OCI-LY7 (cell line): ENCODE measurements at regions of chr1 and their contacts with region 1.

Region 1: DNA sequence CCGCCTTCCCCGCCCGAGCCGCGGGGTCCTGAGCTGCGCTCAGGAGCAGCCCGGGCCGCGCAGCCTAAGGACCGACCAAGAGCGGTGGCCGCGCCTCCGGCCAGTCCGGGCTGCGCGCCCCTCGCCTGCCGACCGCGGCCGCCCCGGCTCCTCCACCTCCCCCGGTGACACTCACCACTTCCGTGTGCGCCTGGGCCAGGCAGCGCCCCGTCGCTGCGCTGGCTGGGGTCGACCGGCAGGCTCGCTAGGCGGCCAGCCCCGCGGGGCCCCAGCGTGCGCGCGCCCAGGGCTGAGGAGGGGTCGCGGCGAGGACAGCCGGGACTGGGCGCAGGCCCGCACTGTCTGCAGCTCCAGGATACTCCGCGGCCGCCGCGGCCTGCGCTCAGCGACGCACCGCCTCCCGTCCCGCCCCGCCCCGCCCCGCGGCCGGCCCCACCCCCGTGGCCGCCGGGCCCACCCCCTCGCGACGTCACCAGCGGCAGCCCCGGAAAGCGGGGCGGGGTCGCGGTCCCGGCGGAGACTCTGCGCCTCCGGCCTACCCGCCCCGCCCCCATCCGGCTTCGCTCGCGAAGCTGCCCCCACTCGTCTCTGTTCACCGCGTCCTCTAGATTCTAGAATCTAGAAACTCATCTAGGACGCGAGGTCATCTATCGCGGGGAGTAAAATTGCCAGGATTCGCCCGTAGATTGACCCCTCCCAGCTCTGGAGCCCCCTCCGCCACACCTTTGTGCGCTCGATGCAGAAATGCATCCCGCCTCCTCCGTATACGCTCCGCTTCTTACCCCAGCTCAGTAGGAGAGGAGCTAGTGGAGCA is at the start of gene JAK1:
- DNase-seq: peak; percentile 93
- H3K4me3 ChIP-seq: peak within 1 kb of the TSS; percentile 83
- H3K27ac ChIP-seq: peak within 1 kb of the TSS; percentile 69
- H3K4me1 ChIP-seq: peaks cover 51% of the 10 kb centered on the region
- CTCF ChIP-seq: no peak
- total RNA-seq, gene JAK1: 66.9 and 72.6 TPM in 2 replicates

Region 2: DNA sequence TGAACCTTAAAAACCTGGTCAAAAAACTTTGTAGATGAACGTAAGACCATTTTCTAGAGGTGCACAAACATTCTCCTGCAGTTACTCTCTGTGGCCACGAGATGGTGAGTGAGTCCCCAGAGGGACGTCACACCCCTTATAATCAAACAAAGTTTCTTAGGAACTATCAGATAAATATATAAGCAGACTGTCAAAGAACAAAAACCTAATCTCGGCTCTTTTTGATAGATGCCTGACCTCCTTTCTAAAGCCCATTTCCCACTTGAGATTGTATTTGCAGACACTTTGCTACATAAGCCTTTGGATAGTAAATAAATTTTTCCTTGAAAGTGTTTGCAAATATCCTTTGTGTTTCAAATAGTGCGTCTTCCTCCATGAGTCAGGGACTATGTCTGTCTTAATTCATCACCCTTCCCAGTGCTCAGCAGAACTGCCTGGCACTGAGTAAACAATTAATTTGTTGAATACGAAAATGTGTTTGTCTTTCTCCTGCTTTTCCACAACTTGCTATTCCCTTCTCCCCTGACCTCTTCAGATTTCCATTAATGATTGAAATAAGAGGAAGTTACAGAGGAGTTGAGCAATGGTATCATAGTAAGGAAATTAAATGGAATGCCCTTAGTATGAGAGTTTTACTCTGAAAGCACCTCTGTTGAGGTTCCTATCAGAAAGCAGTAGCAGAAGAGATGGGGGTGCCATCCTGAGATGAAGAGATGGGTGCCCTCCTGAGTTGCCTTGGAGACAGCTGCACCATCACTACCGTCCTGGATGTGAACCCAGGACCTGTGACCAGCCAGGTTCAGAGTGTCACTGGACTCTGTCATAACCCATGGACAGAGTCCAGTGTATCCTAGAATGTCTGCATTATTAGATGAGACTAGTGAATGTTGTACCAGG is 279.3 kb before region 1 on chr1:
- CTCF ChIA-PET with region 1: no interaction called
- POLR2A ChIA-PET with region 1: no interaction called
- intact Hi-C with region 1: loop called (anchors 10 kb)
- DNase-seq: peak; percentile 45
- H3K4me3 ChIP-seq: no peak overlapping the region
- H3K27ac ChIP-seq: no peak overlapping the region
- H3K4me1 ChIP-seq: no peaks in the 10 kb centered on the region
- CTCF ChIP-seq: peak; percentile 89

Region 3: GRCh38 chr1:65036545-65037180 is 70.3 kb after region 1 on chr1:
- CTCF ChIA-PET with region 1: no interaction called
- POLR2A ChIA-PET with region 1: interaction called, 6 read pairs
- intact Hi-C with region 1: loop called (anchors 2 kb)
- DNase-seq: no peak
- H3K4me3 ChIP-seq: no peak overlapping the region
- H3K27ac ChIP-seq: no peak overlapping the region
- H3K4me1 ChIP-seq: peaks cover 6% of the 10 kb centered on the region
- CTCF ChIP-seq: no peak

Region 4: DNA sequence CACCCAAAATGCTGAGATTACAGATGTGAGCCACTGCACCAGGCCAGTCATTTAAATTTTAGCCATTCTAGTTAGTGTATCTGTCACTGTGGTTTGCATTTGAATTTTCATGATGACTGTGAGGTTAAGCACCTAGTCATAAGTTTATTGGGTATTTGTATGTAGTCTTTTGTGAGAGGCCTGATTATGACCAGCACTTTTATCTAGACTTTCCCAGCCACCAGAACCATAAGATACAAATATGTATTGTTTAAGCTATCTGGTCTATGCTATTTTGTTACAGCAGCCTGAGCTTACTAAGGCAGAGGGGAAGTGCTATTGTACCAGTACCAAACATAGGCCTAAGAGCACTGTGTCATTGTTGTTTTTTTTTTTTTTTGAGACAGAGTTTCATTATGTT is 323.1 kb after region 1 on chr1:
- CTCF ChIA-PET with region 1: no interaction called
- POLR2A ChIA-PET with region 1: no interaction called
- intact Hi-C with region 1: loop called (anchors 10 kb)
- DNase-seq: no peak
- H3K4me3 ChIP-seq: no peak overlapping the region
- H3K27ac ChIP-seq: no peak overlapping the region
- H3K4me1 ChIP-seq: no peaks in the 10 kb centered on the region
- CTCF ChIP-seq: no peak

Region 5: GRCh38 chr1:65812065-65812464 is 845.7 kb after region 1 on chr1:
- CTCF ChIA-PET with region 1: no interaction called
- POLR2A ChIA-PET with region 1: no interaction called
- intact Hi-C with region 1: no loop called
- DNase-seq: no peak
- H3K4me3 ChIP-seq: no peak overlapping the region
- H3K27ac ChIP-seq: no peak overlapping the region
- H3K4me1 ChIP-seq: no peaks in the 10 kb centered on the region
- CTCF ChIP-seq: no peak